ENCODE measurements at regions of chr3 and their contacts with region 1.

Region 1: GRCh38 chr3:100076731-100077529 is 37.4 kb downstream of the FILIP1L start:
- DNase-seq: peak; percentile 53
- H3K4me3 ChIP-seq: peak overlapping the region; percentile 31
- H3K4me3 Mint-ChIP-seq: peak overlapping the region; percentile 69
- H3K27ac Mint-ChIP-seq: peak overlapping the region; percentile 73
- H3K4me1 ChIP-seq: peaks cover 53% of the 10 kb centered on the region
- H3K4me1 Mint-ChIP-seq: peaks cover 54% of the 10 kb centered on the region
- H3K27me3 ChIP-seq: no peaks in the 10 kb centered on the region
- H3K27me3 Mint-ChIP-seq: no peaks in the 10 kb centered on the region
- CTCF ChIP-seq: no peak

Region 2: GRCh38 chr3:99929745-99930139 is 147.2 kb before region 1 on chr3:
- CTCF ChIA-PET with region 1: no interaction called
- POLR2A ChIA-PET with region 1: no interaction called
- intact Hi-C with region 1: loop called (anchors 1 kb)
- DNase-seq: no peak
- H3K4me3 ChIP-seq: no peak overlapping the region
- H3K4me3 Mint-ChIP-seq: no peak overlapping the region
- H3K27ac Mint-ChIP-seq: no peak overlapping the region
- H3K4me1 ChIP-seq: peaks cover 42% of the 10 kb centered on the region
- H3K4me1 Mint-ChIP-seq: peaks cover 20% of the 10 kb centered on the region
- H3K27me3 ChIP-seq: no peaks in the 10 kb centered on the region
- H3K27me3 Mint-ChIP-seq: no peaks in the 10 kb centered on the region
- CTCF ChIP-seq: no peak

Region 3: GRCh38 chr3:100047455-100048141 is 29.3 kb before region 1 on chr3:
- CTCF ChIA-PET with region 1: interaction called, 4 read pairs
- POLR2A ChIA-PET with region 1: interaction called, 5 read pairs
- intact Hi-C with region 1: loop called (anchors 1 kb)
- DNase-seq: peak; percentile 69 to 74
- H3K4me3 ChIP-seq: no peak overlapping the region
- H3K4me3 Mint-ChIP-seq: peak overlapping the region; percentile 35
- H3K27ac Mint-ChIP-seq: peak overlapping the region; percentile 86
- H3K4me1 ChIP-seq: peaks cover 72% of the 10 kb centered on the region
- H3K4me1 Mint-ChIP-seq: peaks cover 43% of the 10 kb centered on the region
- H3K27me3 ChIP-seq: no peaks in the 10 kb centered on the region
- H3K27me3 Mint-ChIP-seq: no peaks in the 10 kb centered on the region
- CTCF ChIP-seq: no peak

Region 4: DNA sequence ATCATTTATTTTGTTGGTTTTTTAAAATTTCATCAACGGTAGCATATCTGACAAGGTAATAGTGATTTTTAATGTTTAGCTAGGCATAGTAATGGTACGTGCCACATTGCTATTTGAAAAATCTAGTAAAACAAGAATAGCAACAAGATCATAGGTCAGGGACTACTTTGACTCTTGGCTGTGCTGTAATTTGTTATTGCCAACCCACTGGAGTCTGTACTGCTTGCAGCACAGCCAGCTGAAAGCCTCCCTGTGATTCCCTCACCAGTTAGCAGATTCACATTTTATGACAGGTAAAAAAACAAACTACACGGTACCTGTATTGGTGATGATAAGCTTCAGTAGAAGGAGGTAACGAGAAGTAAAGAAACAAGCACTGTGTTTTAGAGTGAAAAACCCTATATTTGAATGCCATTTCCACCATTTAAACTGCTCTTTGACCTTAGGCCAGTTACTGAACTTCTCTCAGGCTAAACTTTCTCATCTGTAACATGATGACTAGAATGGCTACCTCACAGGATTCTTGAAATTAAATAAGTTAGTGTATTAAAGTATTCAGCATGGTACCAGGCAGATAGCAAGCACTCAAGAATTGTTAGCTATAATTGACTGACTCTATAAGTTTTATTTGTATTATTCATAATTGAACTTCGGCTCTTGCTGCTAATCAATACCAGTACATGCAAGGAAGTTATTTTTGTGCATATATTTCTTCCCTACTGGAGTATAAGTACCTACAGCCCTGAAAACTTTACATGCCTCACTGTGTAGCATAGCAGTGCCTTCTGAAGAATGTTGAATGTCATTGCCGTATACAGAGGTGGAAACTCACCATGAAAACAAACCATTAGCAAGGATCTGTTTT is 21.2 kb after region 1 on chr3:
- CTCF ChIA-PET with region 1: no interaction called
- POLR2A ChIA-PET with region 1: interaction called, 3 read pairs
- intact Hi-C with region 1: loop called (anchors 1 kb)
- DNase-seq: peak; percentile 74 to 82
- H3K4me3 ChIP-seq: no peak overlapping the region
- H3K4me3 Mint-ChIP-seq: peak overlapping the region; percentile 36
- H3K27ac Mint-ChIP-seq: peak overlapping the region; percentile 25
- H3K4me1 ChIP-seq: peaks cover 44% of the 10 kb centered on the region
- H3K4me1 Mint-ChIP-seq: peaks cover 34% of the 10 kb centered on the region
- H3K27me3 ChIP-seq: no peaks in the 10 kb centered on the region
- H3K27me3 Mint-ChIP-seq: no peaks in the 10 kb centered on the region
- CTCF ChIP-seq: no peak

Region 5: GRCh38 chr3:100175637-100176280 is 98.8 kb after region 1 on chr3:
- CTCF ChIA-PET with region 1: no interaction called
- POLR2A ChIA-PET with region 1: no interaction called
- intact Hi-C with region 1: no loop called
- DNase-seq: no peak
- H3K4me3 ChIP-seq: no peak overlapping the region
- H3K4me3 Mint-ChIP-seq: no peak overlapping the region
- H3K27ac Mint-ChIP-seq: no peak overlapping the region
- H3K4me1 ChIP-seq: no peaks in the 10 kb centered on the region
- H3K4me1 Mint-ChIP-seq: no peaks in the 10 kb centered on the region
- H3K27me3 ChIP-seq: no peaks in the 10 kb centered on the region
- H3K27me3 Mint-ChIP-seq: no peaks in the 10 kb centered on the region
- CTCF ChIP-seq: no peak